Calu3 (cell line): ENCODE measurements at regions of chr1 and their contacts with region 1.

Region 1: GRCh38 chr1:117436513-117436912 is 69.3 kb downstream of the MAN1A2 start:
- DNase-seq: no peak
- H3K4me3 Mint-ChIP-seq: no peak overlapping the region
- H3K27ac Mint-ChIP-seq: no peak overlapping the region
- H3K4me1 Mint-ChIP-seq: no peaks in the 10 kb centered on the region
- H3K27me3 Mint-ChIP-seq: no peaks in the 10 kb centered on the region
- CTCF ChIP-seq: no peak

Region 2: DNA sequence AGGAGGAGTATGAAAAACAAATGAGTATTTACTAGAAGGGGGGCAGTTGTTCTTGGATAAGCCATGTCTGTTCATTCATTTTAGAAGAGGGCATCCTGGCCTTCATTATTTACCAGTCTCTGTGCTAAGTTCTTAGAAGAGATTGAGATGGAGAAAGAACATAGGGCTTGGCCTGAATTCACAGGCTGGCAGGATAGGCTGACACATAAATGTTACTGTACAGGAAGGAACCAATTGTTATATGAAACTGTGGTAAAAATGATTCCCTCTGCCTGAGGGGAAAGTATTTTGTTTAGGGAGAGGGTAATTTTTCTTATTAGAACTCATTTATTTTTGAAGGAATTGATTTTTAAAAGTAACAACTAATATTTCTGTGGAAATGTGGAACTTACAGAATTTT is 30.2 kb after region 1 on chr1:
- CTCF ChIA-PET with region 1: no interaction called
- intact Hi-C with region 1: loop called (anchors 2 kb)
- DNase-seq: no peak
- H3K4me3 Mint-ChIP-seq: no peak overlapping the region
- H3K27ac Mint-ChIP-seq: no peak overlapping the region
- H3K4me1 Mint-ChIP-seq: no peaks in the 10 kb centered on the region
- H3K27me3 Mint-ChIP-seq: no peaks in the 10 kb centered on the region
- CTCF ChIP-seq: no peak

Region 3: GRCh38 chr1:117644696-117645311 is 208.3 kb after region 1 on chr1:
- CTCF ChIA-PET with region 1: no interaction called
- intact Hi-C with region 1: no loop called
- DNase-seq: no peak
- H3K4me3 Mint-ChIP-seq: no peak overlapping the region
- H3K27ac Mint-ChIP-seq: no peak overlapping the region
- H3K4me1 Mint-ChIP-seq: no peaks in the 10 kb centered on the region
- H3K27me3 Mint-ChIP-seq: peaks cover 21% of the 10 kb centered on the region
- CTCF ChIP-seq: no peak